ENCODE measurements at regions of chr16 and their contacts with region 1.

Region 1: DNA sequence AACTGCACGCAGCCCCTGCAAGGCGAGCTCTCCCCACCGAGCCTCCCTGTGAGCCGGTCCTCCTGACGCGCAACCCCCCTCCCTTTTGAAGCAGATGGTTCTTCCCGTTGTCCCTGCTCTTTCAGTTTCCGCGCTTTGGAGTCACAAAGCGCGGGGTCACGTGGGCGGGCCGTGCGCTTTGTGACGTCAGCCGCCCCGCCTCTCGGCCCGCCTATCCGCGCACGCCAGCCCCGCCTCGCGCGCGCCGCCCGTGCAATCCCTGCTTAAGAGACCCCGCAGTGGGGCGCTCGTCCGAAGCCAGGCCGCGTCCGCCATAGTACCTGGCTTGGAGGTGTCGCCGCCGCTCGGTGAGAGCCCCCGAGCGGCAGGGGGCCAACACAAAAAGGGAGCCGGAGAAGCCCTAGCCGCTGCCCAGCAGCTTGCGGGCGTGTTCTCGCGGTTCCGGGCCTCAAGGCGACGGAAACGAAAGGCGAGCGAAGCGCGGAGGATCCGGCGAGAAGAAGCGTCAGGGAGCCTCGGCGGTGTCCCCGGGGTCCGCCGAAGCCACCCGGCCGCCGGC is at the start of gene RBBP6:
- DNase-seq: peak; percentile 92
- H3K4me3 Mint-ChIP-seq: peak within 1 kb of the TSS; percentile 100
- H3K27ac Mint-ChIP-seq: peak within 1 kb of the TSS; percentile 100
- H3K4me1 Mint-ChIP-seq: peaks cover 30% of the 10 kb centered on the region
- H3K27me3 Mint-ChIP-seq: no peaks in the 10 kb centered on the region
- total RNA-seq, gene RBBP6: 67.0 and 68.4 TPM in 2 replicates

Region 2: GRCh38 chr16:23835390-23836077 is 703.8 kb before region 1 on chr16 and contains the start of gene PRKCB:
- intact Hi-C with region 1: loop called (anchors 1 kb)
- DNase-seq: peak; percentile 90
- H3K4me3 Mint-ChIP-seq: peak within 1 kb of the TSS; percentile 96
- H3K27ac Mint-ChIP-seq: peak within 1 kb of the TSS; percentile 90
- H3K4me1 Mint-ChIP-seq: peaks cover 69% of the 10 kb centered on the region
- H3K27me3 Mint-ChIP-seq: peaks cover 12% of the 10 kb centered on the region
- total RNA-seq, gene PRKCB: 100 and 109 TPM in 2 replicates

Region 3: DNA sequence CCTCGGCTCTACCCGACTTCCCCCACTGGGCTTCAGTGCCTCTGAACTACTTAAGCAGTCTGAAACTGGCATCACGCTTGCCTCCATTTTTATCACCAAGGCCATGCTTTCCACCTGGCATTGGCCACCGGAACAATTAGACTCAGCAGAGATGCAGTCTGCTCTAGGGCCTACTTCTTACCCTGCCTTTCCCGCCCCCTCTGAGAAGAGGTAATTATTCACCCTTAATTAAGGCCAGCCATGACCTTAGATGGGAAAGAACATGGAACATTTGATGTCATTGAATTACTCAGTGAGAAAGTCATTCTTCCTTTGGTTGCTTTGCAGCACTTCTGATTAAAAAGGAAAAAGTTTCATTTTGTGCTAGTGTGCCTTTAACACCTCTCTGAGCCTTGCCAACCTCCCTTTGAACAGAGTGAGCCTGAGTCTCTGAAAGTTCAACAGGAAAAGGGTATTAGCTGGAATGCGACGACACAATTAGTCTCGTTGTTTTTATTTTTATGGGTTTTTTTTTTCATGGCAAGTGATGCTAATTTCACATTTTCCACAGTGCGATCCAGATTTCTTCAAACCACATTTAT is 129.2 kb after region 1 on chr16:
- intact Hi-C with region 1: loop called (anchors 2 kb)
- DNase-seq: no peak
- H3K4me3 Mint-ChIP-seq: peak overlapping the region; percentile 66
- H3K27ac Mint-ChIP-seq: peak overlapping the region; percentile 95
- H3K4me1 Mint-ChIP-seq: peaks cover 27% of the 10 kb centered on the region
- H3K27me3 Mint-ChIP-seq: peaks cover 2% of the 10 kb centered on the region

Region 4: DNA sequence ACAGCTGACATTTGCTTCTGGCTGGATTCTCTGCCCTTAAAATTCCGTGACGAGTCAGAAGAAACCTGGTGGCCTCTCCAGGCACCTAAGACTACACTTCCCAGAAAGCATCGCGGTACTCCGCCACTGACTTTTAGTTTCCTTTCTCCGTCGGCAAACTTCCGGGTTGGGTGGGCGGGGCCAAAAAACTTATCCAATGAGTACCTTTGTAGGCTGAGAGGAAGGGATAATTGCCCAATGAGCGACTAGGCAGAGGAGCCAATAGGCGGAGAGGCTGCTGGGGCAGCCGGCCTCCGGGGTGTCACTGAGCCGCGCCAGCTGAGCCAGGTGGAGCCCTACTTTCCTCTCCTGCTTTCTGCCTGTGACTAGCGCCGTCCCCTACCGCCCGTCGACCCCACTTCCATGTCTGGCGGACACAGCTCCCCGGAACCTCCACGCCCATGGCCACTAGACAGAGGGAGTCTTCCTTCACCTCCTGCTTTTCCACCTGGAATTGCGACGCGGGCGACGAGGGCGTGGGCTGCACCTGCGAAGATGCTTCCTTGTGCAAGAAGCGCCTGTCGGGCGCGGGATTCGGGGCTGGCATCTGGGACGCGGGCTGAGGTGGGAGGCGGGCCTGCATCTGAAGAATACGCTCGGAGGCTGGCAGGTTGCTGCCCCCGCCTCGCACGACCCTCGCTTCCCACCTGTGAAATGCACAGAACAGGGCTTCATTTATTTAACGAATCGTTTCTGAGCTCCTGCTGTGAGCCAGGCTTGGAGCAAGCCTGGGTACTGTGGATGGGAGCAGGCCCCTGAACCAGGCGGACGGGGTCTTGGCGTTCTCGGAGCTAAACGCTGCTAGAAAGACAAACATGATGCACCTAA is 492.3 kb after region 1 on chr16:
- intact Hi-C with region 1: loop called (anchors 5 kb)
- DNase-seq: peak; percentile 88
- H3K4me3 Mint-ChIP-seq: peak overlapping the region; percentile 85
- H3K27ac Mint-ChIP-seq: peak overlapping the region; percentile 98
- H3K4me1 Mint-ChIP-seq: peaks cover 43% of the 10 kb centered on the region
- H3K27me3 Mint-ChIP-seq: peaks cover under 1% of the 10 kb centered on the region

Measured in activated T-helper 1 cell treated with anti-CD3 and anti-CD28 coated beads, Interleukin-12 subunit alpha, Interleukin-12 subunit beta, Interleukin-2, Interleukin-4 antibody, amounts not matched to agents 30 ng/mL and 10 ng/mL and 1 ng/mL, durations not matched to agents 14 hours and 24 hours and 36 hours (primary cell).